PC-9 (cell line): ENCODE measurements at regions of chr4 and their contacts with region 1.

Region 1: DNA sequence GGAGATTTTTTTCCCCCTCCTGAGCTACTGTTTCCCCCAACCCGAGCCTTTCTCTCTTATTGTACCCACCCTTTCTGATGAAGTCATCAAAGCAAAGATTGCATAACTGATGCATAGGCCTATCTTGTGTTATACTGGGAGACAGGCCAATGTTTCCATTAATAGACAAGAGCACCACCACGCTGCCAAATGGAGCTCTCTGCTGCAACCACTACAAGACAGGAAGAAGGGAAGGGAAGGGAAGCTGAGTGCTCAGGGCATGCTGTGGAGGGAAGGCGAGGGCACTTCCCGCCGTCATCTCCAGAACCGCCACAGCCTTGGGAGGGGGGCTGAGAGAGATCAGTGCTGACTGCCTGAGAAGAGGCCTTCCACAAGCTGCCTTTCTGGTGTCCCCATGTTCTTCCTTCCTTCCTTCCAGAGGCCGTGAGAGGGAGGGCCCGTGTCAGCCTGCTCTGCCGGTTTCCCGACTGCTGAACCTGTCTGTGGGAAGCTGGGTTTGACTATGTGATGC is 75.0 kb downstream of the MGST2 start:
- DNase-seq: peak in 1 of 2 experiments; percentile 58
- H3K4me3 ChIP-seq: no peak overlapping the region
- H3K27ac ChIP-seq: no peak overlapping the region
- H3K4me1 ChIP-seq: no peaks in the 10 kb centered on the region
- H3K27me3 ChIP-seq: no peaks in the 10 kb centered on the region
- CTCF ChIP-seq: no peak

Region 2: GRCh38 chr4:139988863-139989733 is 248.5 kb after region 1 on chr4:
- CTCF ChIA-PET with region 1: no interaction called
- POLR2A ChIA-PET with region 1: no interaction called
- intact Hi-C with region 1: loop called (anchors 5 kb)
- DNase-seq: peak; percentile 78 to 88
- H3K4me3 ChIP-seq: no peak overlapping the region
- H3K27ac ChIP-seq: peak overlapping the region; percentile 21; the same call in 1 of the 2 replicates
- H3K4me1 ChIP-seq: peaks cover 13% of the 10 kb centered on the region
- H3K27me3 ChIP-seq: no peaks in the 10 kb centered on the region
- CTCF ChIP-seq: no peak

Region 3: GRCh38 chr4:140252742-140253555 is 512.4 kb after region 1 on chr4:
- CTCF ChIA-PET with region 1: no interaction called
- POLR2A ChIA-PET with region 1: no interaction called
- intact Hi-C with region 1: loop called (anchors 5 kb)
- DNase-seq: peak; percentile 40 to 76
- H3K4me3 ChIP-seq: peak overlapping the region; percentile 59
- H3K27ac ChIP-seq: peak overlapping the region; percentile 73
- H3K4me1 ChIP-seq: peaks cover 69% of the 10 kb centered on the region
- H3K27me3 ChIP-seq: no peaks in the 10 kb centered on the region
- CTCF ChIP-seq: peak; percentile 84

Region 4: DNA sequence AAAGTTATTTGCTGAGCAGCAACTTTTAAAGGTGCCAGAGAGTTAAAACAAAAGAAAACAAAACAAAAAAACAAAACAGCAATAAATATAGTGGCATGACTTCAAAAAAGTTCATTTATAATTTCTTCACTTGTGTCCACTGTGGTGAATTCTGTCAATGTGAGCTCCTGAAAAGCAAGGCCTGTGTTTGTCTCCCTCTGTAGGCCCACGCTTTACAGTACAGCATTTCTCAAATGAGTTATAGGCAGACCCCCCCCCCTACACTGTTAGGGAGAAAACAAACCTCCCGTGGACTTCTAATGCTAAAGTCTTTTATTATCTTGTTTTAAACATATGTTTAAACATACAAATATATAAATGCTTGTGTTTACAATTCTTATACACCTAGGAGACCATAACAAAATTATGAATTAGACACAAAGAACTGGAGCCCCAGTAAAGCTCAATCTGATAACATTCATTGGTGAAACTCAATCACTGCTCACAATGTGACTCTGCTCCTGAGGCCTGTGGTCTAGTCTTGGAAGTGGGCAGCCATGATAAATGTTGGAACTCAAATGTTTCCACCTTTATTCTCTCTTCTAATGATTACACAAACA is 585.9 kb after region 1 on chr4:
- CTCF ChIA-PET with region 1: no interaction called
- POLR2A ChIA-PET with region 1: no interaction called
- intact Hi-C with region 1: loop called (anchors 5 kb)
- DNase-seq: peak in 1 of 2 experiments; percentile 25
- H3K4me3 ChIP-seq: no peak overlapping the region
- H3K27ac ChIP-seq: no peak overlapping the region
- H3K4me1 ChIP-seq: no peaks in the 10 kb centered on the region
- H3K27me3 ChIP-seq: no peaks in the 10 kb centered on the region
- CTCF ChIP-seq: peak; percentile 55